ENCODE measurements at regions of chr2 and their contacts with region 1.

Region 1: GRCh38 chr2:238339395-238340213 is 19.3 kb downstream of the TRAF3IP1 start:
- DNase-seq: peak; percentile 29 to 49
- ATAC-seq: peak; percentile 86 to 87
- H3K4me3 ChIP-seq: no peak overlapping the region
- H3K27ac ChIP-seq: peak overlapping the region in 1 of 2 experiments; percentile 47; a peak in 3 of 6 replicates
- H3K4me1 ChIP-seq: peaks cover 6% of the 10 kb centered on the region; the same call in 2 of the 3 replicates
- CTCF ChIP-seq: peak; percentile 46; the same call in 1 of the 3 replicates
- EP300 ChIP-seq: no peak
- POLR2A ChIP-seq: no peak
- RAD21 ChIP-seq: peak; percentile 61 to 71

Region 2: GRCh38 chr2:238288650-238289573 is 50.7 kb before region 1 on chr2:
- CTCF ChIA-PET with region 1: interaction called, 14 read pairs
- POLR2A ChIA-PET with region 1: no interaction called
- DNase-seq: peak; percentile 76 to 99
- ATAC-seq: peak; percentile 58 to 62
- H3K4me3 ChIP-seq: peak overlapping the region; percentile 67
- H3K27ac ChIP-seq: peak overlapping the region; percentile 90 to 95
- H3K4me1 ChIP-seq: peaks cover 69% of the 10 kb centered on the region
- CTCF ChIP-seq: peak; percentile 37; the same call in 2 of the 3 replicates
- EP300 ChIP-seq: no peak
- POLR2A ChIP-seq: peak; percentile 58; the same call in 1 of the 2 replicates
- RAD21 ChIP-seq: no peak; a peak in 1 of 5 replicates

Region 3: GRCh38 chr2:238320246-238320647 is 19.4 kb before region 1 on chr2 and contains the start of gene TRAF3IP1:
- CTCF ChIA-PET with region 1: interaction called, 18 read pairs
- POLR2A ChIA-PET with region 1: no interaction called
- DNase-seq: peak; percentile 89 to 92
- ATAC-seq: peak; percentile 97
- H3K4me3 ChIP-seq: peak within 1 kb of the TSS; percentile 99
- H3K27ac ChIP-seq: peak within 1 kb of the TSS; percentile 90 to 95
- H3K4me1 ChIP-seq: peaks cover 13% of the 10 kb centered on the region; the same call in 2 of the 3 replicates
- CTCF ChIP-seq: no peak
- EP300 ChIP-seq: no peak
- POLR2A ChIP-seq: no peak; the same call in none of the 2 replicates
- RAD21 ChIP-seq: no peak
- polyA plus RNA-seq, gene TRAF3IP1: 10.6 and 10.9 TPM in 2 replicates

Region 4: DNA sequence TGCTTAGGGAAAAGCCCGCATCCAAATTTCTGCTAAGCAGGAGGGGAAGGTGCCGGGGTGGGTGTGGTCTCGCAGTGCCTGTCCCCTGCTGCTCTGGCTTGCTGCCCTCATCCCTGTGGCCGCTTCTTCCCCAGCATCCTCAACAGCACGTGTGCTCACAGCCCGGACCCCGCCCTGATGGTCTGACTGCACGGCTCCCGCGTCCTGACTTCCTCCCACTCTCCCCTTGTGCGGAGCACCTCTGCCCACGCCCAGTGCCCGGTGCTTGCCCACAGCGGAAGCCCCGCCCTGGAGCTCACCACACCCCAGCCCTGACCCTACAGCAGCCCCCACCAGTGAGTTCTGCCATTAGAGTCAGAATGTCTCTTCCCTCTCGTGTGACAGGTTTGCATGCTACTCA is 1407.7 kb after region 1 on chr2:
- CTCF ChIA-PET with region 1: no interaction called
- POLR2A ChIA-PET with region 1: no interaction called
- DNase-seq: no peak
- ATAC-seq: no peak
- H3K4me3 ChIP-seq: no peak overlapping the region
- H3K27ac ChIP-seq: no peak overlapping the region
- H3K4me1 ChIP-seq: no peaks in the 10 kb centered on the region
- CTCF ChIP-seq: no peak
- EP300 ChIP-seq: no peak
- POLR2A ChIP-seq: no peak
- RAD21 ChIP-seq: no peak